Gastrocnemius medialis (tissue), 4 donors: ENCODE measurements at regions of chr1 and their contacts with region 1.

Region 1: GRCh38 chr1:38719880-38720279 is 139.7 kb downstream of the RRAGC start:
- DNase-seq: no peak
- ATAC-seq: no peak
- H3K4me3 ChIP-seq: no peak overlapping the region
- H3K27ac ChIP-seq: no peak overlapping the region
- H3K4me1 ChIP-seq: no peaks in the 10 kb centered on the region
- H3K27me3 ChIP-seq: peaks cover 0 to 3% (median 0%) of the 10 kb centered on the region in 3 donors
- CTCF ChIP-seq: no peak
- POLR2A ChIP-seq: no peak

Region 2: GRCh38 chr1:38708701-38709258 is 11.1 kb before region 1 on chr1:
- in situ Hi-C with region 1: no loop called
- intact Hi-C with region 1: loop called (anchors 1 kb)
- DNase-seq: no peak
- ATAC-seq: no peak
- H3K4me3 ChIP-seq: no peak overlapping the region
- H3K27ac ChIP-seq: no peak overlapping the region
- H3K4me1 ChIP-seq: no peaks in the 10 kb centered on the region
- H3K27me3 ChIP-seq: no peaks in the 10 kb centered on the region
- CTCF ChIP-seq: no peak
- POLR2A ChIP-seq: no peak